ENCODE measurements at regions of chr1 and their contacts with region 1.

Region 1: DNA sequence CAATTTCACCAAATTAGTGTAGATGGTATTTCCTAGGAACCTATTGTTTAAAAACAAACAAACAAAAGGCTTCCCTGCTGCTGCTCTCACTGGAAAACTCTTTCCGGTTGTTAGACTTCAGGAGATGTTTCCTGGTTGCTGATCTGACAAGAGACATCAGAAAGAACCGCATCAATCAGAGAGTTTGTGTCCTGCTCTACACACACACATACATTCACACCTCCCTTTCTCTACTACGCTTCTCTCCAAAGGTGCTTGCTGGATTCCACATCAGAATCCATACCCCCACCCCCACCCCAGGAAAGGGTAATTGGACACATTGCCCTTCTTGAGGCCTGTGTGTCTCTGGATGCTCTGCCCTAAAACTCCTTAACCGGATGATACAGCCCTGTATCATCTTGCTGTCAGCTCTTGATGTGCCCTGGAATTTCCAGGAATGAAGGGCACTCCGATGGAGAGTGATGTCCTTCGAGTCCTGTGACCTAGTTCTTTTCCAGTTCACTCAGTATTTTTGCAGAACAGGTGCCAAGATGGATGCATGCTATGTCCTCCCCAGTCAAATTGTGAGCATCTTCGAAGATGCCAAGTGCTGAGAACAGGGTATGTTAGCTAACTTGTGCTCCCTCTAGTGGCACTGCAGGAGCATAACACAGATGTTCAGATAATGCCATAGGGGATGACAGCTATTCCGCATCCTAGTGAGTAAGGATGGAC is 113.7 kb upstream of the SLC35F3 start:
- DNase-seq: peak in 6 of 9 donors; percentile 21 to 49 (median 33)
- ATAC-seq: peak; percentile 74
- H3K4me3 ChIP-seq: no peak overlapping the region
- H3K4me3 Mint-ChIP-seq: no peak overlapping the region
- H3K27ac ChIP-seq: no peak overlapping the region
- H3K27ac Mint-ChIP-seq: no peak overlapping the region
- H3K4me1 ChIP-seq: no peaks in the 10 kb centered on the region
- H3K4me1 Mint-ChIP-seq: no peaks in the 10 kb centered on the region
- H3K27me3 ChIP-seq: no peaks in the 10 kb centered on the region
- H3K27me3 Mint-ChIP-seq: peaks cover 14 to 35% (median 31%) of the 10 kb centered on the region in 5 donors

Region 2: GRCh38 chr1:233394860-233395717 is 395.7 kb before region 1 on chr1:
- CTCF ChIA-PET with region 1: no interaction called
- POLR2A ChIA-PET with region 1: no interaction called
- intact Hi-C with region 1: loop called in 1 of 2 experiments (anchors 1 kb)
- DNase-seq: peak in 5 of 9 donors; percentile 9 to 36 (median 17)
- ATAC-seq: peak; percentile 61
- H3K4me3 ChIP-seq: no peak overlapping the region
- H3K4me3 Mint-ChIP-seq: no peak overlapping the region
- H3K27ac ChIP-seq: no peak overlapping the region
- H3K27ac Mint-ChIP-seq: no peak overlapping the region
- H3K4me1 ChIP-seq: no peaks in the 10 kb centered on the region
- H3K4me1 Mint-ChIP-seq: no peaks in the 10 kb centered on the region
- H3K27me3 ChIP-seq: peaks cover 0 to 3% of the 10 kb centered on the region in 2 donors
- H3K27me3 Mint-ChIP-seq: peaks cover 27 to 45% (median 38%) of the 10 kb centered on the region in 5 donors

Measured in naive thymus-derived CD4-positive, alpha-beta T cell (primary cell).